ENCODE measurements at regions of chr1 and their contacts with region 1.

Region 1: DNA sequence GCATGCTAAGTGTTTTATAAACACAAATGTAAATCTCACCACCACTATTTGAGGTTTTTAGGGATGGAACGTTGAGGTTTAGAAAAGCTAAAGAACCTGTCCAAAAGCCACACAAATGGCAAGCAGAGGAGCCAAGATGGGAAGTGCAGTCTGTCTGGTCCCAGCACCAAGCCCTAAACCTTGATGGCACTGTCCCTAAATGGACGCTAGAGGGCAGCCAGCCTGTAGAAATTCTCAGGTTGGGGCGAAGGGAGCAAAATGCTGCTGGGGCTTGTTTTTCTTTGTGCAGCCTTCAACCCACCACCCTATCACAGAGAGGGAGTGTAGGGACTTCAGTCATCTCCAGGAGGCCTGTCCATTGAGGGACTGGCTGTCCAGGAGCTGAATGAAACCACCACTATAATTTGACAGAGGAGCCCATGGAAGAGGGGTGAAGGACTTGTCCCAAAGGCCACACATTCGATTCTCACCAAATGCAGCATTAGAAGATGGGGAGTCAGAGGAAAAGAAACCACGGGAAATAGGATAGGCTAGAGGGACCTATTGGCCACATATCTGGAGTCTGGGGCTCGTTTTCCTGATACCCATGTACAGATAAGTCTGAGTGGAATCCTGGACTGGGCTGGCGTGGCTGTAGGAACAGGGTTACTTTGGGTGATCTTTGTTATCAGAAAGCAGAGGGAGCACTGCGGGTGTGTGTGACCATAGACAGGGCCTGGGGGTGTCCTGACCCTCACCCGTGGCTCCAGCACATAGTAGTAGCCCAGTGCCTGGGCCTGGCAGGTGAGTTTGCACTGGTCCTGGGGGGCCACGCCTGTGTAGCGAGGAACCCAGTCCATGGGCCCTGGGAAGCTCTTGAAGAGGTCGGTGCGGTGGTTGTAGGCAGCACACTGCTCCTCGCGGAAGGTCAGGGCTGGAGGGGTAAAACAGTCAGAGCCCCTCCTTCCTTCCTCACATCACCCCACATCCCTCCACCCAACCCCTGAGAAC is 6.1 kb downstream of the ADAMTS4 start:
- DNase-seq: peak; percentile 89
- H3K4me3 ChIP-seq: no peak overlapping the region
- H3K27ac ChIP-seq: peak overlapping the region in 1 of 2 experiments; percentile 48; a peak in 2 of 4 replicates
- H3K4me1 ChIP-seq: peaks cover 11 to 35% of the 10 kb centered on the region in 2 experiments; a peak in 3 of 4 replicates
- H3K27me3 ChIP-seq: no peaks in the 10 kb centered on the region
- CTCF ChIP-seq: peak; percentile 86
- EP300 ChIP-seq: no peak
- RAD21 ChIP-seq: peak; percentile 85

Region 2: DNA sequence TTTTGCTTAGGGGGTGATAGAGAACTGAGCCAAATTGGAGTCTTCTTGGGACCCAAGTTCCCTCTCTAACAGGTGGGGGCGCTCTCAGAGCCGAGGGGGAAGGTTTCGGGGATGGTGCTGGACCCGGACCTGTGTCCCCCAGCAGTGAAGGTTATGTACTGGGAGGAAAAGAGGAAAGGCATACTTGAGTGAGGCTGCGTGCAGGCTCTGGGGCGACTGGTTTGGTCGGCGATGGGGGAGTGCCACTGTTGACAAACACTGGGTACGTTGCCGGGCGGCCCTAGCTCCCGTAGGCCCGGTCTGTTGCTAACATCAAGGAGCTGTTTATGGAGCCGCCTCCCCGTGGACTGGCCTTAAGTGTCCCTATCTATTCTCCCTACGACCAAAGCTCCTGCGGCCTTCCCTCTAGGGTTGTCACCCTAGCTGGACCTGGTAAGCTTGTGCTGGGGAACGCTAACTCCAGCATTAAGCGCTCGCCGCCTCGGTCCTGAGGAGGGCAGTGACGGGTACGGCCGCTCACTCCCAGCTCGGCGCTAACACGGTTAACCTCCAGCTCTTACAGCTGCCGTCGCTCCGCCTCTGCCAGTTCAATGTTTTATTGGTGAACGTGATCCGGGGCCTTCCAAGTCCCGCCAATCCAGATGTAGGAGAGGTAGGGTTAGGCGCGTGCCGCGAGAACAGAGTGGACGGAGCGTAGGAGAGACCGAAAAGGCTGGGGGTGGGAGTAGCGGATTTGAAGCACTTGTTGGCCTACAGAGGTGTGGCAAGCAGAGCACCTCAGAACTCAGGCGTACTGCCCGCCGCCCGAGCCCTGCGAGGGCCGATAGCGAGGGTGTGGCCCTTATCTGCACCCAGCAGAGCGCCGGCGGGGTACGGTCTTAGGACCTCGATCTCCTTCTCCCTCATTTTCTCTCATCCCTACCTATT is 26.8 kb before region 1 on chr1 and contains the start of gene PPOX:
- CTCF ChIA-PET with region 1: interaction called, 16 read pairs
- POLR2A ChIA-PET with region 1: interaction called, 5 read pairs
- DNase-seq: peak; percentile 90
- H3K4me3 ChIP-seq: peak within 1 kb of the TSS; percentile 80 to 90
- H3K27ac ChIP-seq: peak within 1 kb of the TSS; percentile 86 to 88
- H3K4me1 ChIP-seq: peaks cover 0 to 26% of the 10 kb centered on the region in 2 experiments; a peak in 1 of 4 replicates
- H3K27me3 ChIP-seq: no peaks in the 10 kb centered on the region
- CTCF ChIP-seq: peak; percentile 75
- EP300 ChIP-seq: no peak
- RAD21 ChIP-seq: no peak
- polyA plus RNA-seq, gene PPOX: 30.7 and 47.3 TPM in 2 replicates

Region 3: DNA sequence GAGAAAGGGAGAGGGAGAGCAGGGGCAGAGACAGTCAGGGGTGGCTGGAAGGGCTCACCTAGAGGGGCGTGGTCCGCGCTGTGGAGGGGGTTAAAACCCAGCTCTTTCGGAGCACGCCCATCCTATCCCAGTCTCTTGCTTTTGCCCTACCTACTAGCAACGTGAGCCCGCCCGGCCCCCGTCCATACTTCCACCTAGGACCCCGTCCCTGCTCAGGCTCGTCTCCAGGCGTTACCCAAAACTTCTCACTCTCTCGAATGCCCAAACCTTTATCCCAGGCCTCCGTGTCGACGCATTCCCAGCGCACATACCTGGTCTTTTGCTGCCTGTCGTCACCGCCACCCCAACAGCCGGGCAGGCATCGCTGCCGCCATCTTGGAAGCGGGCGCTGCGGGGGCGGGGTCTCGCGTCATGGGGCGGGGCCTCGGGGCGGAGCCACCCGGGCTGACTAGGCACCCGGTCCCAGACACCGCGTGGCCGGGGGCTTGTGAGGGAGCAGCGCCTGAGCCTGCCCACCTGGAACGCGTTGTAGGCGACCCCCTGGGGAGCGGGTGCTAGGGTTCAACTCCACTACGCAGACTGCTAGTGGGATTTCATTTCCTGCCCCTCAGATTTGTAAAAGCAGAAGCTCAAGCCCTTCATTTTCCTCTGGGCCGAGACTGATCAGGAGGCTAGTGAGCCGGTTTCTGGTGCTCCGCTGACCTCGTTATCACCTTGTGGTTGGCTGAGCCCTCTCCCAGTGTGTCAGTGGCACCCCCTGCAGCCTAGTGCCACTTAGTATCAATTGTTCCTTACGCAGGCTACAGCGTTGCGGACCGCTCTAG is 15.4 kb before region 1 on chr1 and contains the start of gene B4GALT3:
- CTCF ChIA-PET with region 1: interaction called, 32 read pairs
- POLR2A ChIA-PET with region 1: no interaction called
- DNase-seq: peak; percentile 99
- H3K4me3 ChIP-seq: peak within 1 kb of the TSS; percentile 73
- H3K27ac ChIP-seq: peak within 1 kb of the TSS; percentile 44 to 77; a peak in 3 of 4 replicates
- H3K4me1 ChIP-seq: peaks cover 0 to 18% of the 10 kb centered on the region in 2 experiments; a peak in 1 of 4 replicates
- H3K27me3 ChIP-seq: no peaks in the 10 kb centered on the region
- CTCF ChIP-seq: no peak
- EP300 ChIP-seq: no peak
- RAD21 ChIP-seq: peak; percentile 43
- polyA plus RNA-seq, gene B4GALT3: 50.5 and 56.5 TPM in 2 replicates

Region 4: GRCh38 chr1:161209790-161210409 is 17.1 kb after region 1 on chr1:
- CTCF ChIA-PET with region 1: interaction called, 65 read pairs
- POLR2A ChIA-PET with region 1: interaction called, 5 read pairs
- DNase-seq: peak; percentile 84
- H3K4me3 ChIP-seq: no peak overlapping the region; a peak in 1 of 4 replicates
- H3K27ac ChIP-seq: no peak overlapping the region
- H3K4me1 ChIP-seq: no peaks in the 10 kb centered on the region
- H3K27me3 ChIP-seq: no peaks in the 10 kb centered on the region
- CTCF ChIP-seq: peak; percentile 95
- EP300 ChIP-seq: no peak
- RAD21 ChIP-seq: peak; percentile 77

Region 5: GRCh38 chr1:161305867-161306519 is 113.2 kb after region 1 on chr1:
- CTCF ChIA-PET with region 1: interaction called, 12 read pairs
- POLR2A ChIA-PET with region 1: interaction called, 3 read pairs
- DNase-seq: peak; percentile 91
- H3K4me3 ChIP-seq: peak overlapping the region; percentile 71 to 79
- H3K27ac ChIP-seq: 0 out of 4 replicates have a peak overlapping the region, but pooled peaks of 1 of the 2 experiments have one; percentile 8
- H3K4me1 ChIP-seq: peaks cover 0 to 11% of the 10 kb centered on the region in 2 experiments; a peak in 2 of 4 replicates
- H3K27me3 ChIP-seq: no peaks in the 10 kb centered on the region
- CTCF ChIP-seq: peak; percentile 29
- EP300 ChIP-seq: no peak
- RAD21 ChIP-seq: peak; percentile 32

Region 6: GRCh38 chr1:161351482-161351881 is 158.7 kb after region 1 on chr1:
- CTCF ChIA-PET with region 1: no interaction called
- POLR2A ChIA-PET with region 1: no interaction called
- DNase-seq: no peak
- H3K4me3 ChIP-seq: no peak overlapping the region
- H3K27ac ChIP-seq: no peak overlapping the region
- H3K4me1 ChIP-seq: no peaks in the 10 kb centered on the region
- H3K27me3 ChIP-seq: no peaks in the 10 kb centered on the region
- CTCF ChIP-seq: no peak
- EP300 ChIP-seq: no peak
- RAD21 ChIP-seq: no peak

Measured in SK-N-SH (cell line).